ENCODE measurements at regions of chr10 and their contacts with region 1.

Region 1: DNA sequence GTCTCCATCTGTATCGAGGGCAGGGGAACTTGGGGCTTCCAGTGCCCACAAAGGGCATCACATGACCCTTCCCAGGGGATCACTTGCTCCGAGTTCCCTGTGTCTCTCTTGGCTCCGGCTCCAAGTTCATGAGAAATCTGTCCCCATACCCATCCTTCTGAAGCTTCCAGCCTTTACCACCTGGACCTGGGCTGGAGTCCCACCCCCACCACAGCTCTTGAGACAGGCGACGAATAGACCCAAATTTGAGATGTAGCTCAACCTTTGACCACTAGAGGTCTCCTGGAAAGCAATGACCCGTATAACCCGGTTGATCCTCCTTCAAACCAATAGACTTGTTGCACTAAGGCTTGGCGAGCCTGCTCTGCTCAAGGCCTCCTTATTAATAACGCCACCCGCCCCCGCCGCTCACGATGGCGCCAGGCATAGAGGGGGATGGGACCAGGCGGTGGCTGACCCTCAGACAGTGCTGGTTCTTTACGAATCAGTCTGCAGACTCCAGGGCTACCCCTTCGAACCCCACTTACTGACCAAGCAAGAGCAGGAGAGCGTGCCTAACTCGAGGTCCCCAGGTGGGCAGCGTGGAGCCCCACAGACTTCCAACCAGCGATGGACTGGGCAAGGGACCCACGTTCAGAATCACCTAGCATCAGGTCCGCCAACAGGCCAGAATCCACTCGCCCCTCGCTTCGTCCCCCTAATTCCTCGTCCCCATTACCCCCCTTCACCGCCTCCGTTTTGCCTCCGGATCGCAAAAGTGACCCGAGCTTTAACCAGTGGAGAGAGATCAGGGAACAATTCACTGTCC is 4.4 kb upstream of the ARID5B start:
- DNase-seq: peak; percentile 72
- H3K27ac ChIP-seq: no peak overlapping the region
- CTCF ChIP-seq: peak; percentile 66

Region 2: GRCh38 chr10:61503051-61503450 is 394.0 kb before region 1 on chr10:
- CTCF ChIA-PET with region 1: no interaction called
- POLR2A ChIA-PET with region 1: no interaction called
- DNase-seq: peak; percentile 1
- H3K27ac ChIP-seq: no peak overlapping the region
- CTCF ChIP-seq: no peak

Region 3: GRCh38 chr10:61765176-61766087 is 131.6 kb before region 1 on chr10:
- CTCF ChIA-PET with region 1: no interaction called
- POLR2A ChIA-PET with region 1: no interaction called
- DNase-seq: no peak
- H3K27ac ChIP-seq: no peak overlapping the region
- CTCF ChIP-seq: no peak

Region 4: GRCh38 chr10:61882621-61883373 is 14.3 kb before region 1 on chr10:
- CTCF ChIA-PET with region 1: interaction called, 11 read pairs
- POLR2A ChIA-PET with region 1: no interaction called
- DNase-seq: peak; percentile 34
- H3K27ac ChIP-seq: no peak overlapping the region
- CTCF ChIP-seq: no peak

Region 5: GRCh38 chr10:61992671-61993668 is 95.9 kb after region 1 on chr10:
- CTCF ChIA-PET with region 1: interaction called, 13 read pairs
- POLR2A ChIA-PET with region 1: no interaction called
- DNase-seq: peak; percentile 71
- H3K27ac ChIP-seq: no peak overlapping the region
- CTCF ChIP-seq: no peak